ENCODE measurements at regions of chr19 and their contacts with region 1.

Region 1: GRCh38 chr19:41753936-41754529 is 1.3 kb upstream of the CEACAM6 start:
- DNase-seq: peak; percentile 15
- H3K27ac ChIP-seq: no peak overlapping the region
- CTCF ChIP-seq: peak; percentile 81

Region 2: DNA sequence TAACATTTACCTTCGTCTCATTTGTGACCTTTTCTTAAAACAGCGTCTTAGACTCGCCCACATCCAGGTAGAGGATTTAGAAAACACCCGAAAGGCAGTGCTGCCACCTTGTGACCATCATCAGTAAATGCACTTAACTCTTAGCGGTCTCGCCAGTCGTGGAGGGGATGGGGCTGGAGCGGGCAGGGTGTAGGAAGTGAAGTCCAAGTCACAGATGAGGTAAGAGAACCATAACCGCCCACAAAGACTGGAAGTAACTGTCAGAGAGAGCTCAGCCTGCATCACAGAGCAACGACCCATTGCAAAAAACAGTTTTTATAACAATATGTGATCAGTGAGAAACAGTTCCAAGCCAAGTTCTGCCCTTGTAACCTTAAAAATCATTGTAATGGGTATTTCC is 31.6 kb after region 1 on chr19:
- CTCF ChIA-PET with region 1: interaction called, 23 read pairs
- POLR2A ChIA-PET with region 1: no interaction called
- DNase-seq: peak; percentile 85
- H3K27ac ChIP-seq: no peak overlapping the region
- CTCF ChIP-seq: peak; percentile 84

Region 3: GRCh38 chr19:41934849-41935374 is 180.9 kb after region 1 on chr19:
- CTCF ChIA-PET with region 1: no interaction called
- POLR2A ChIA-PET with region 1: no interaction called
- DNase-seq: peak; percentile 63
- H3K27ac ChIP-seq: no peak overlapping the region
- CTCF ChIP-seq: peak; percentile 85

Region 4: DNA sequence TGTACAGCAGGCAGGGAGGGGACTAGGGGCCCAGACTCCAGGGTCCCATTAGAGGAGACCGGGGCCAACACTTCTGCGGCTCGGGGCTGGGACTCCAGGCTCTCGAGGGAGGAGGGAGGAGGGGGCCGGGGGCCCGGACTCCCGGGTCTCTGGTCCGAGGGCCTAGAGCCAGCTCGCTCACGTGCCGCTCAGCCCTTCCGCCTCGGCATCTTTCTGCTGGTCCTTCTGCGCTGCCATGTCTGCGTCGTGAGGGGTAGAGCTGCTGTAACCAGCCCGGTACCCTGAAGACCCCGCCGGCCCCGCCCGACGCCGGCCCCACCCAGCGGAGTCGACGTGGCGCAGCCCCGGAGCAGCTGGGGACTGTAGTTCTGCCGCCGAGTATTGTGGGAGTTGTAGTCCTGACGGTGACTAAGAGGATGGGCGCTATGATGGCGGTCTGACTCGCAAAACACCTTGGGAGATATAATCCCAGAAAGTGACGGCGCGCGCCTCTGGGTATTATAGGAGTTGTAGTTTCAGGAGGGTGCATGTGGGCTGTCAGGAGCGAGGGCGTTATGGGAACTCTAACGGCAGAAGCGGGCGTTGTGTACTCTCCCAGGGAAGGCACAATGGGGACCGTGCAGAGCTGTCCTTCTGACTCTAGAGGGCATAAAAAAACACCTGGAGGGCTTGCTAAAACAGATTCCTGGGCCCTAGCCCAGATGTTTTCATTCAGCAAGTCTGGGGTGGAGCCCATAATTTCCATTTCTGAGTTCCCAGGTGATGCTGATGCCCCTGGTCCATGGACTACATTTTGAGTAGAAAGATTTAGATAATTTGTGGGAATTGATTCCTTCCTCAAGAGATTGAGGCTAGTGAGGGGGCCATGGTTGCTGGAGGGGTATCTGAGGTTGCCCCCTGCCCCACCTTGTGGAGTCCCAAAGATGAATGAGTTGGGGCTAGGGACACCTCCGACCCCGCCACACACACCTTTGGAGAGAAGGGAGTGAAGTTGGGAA is 205.3 kb after region 1 on chr19 and contains the start of gene RABAC1:
- CTCF ChIA-PET with region 1: interaction called, 11 read pairs
- POLR2A ChIA-PET with region 1: no interaction called
- DNase-seq: peak; percentile 82
- H3K27ac ChIP-seq: peak within 1 kb of the TSS; percentile 83
- CTCF ChIP-seq: no peak